ENCODE measurements at regions of chr13 and their contacts with region 1.

Region 1: GRCh38 chr13:100235311-100235901 is 146.5 kb downstream of the PCCA start:
- DNase-seq: peak in 1 of 2 donors; percentile 73
- H3K4me3 ChIP-seq: no peak overlapping the region
- H3K27ac ChIP-seq: no peak overlapping the region
- H3K4me1 ChIP-seq: peaks cover 0 to 43% (median 21%) of the 10 kb centered on the region in 4 donors
- H3K27me3 ChIP-seq: no peaks in the 10 kb centered on the region
- CTCF ChIP-seq: peak in 5 of 7 experiments; percentile 21 to 75 (median 55)
- EP300 ChIP-seq: no peak
- POLR2A ChIP-seq: no peak

Region 2: GRCh38 chr13:99656092-99656745 is 579.2 kb before region 1 on chr13:
- intact Hi-C with region 1: loop called (anchors 10 kb)
- DNase-seq: peak; percentile 84 to 91
- H3K4me3 ChIP-seq: no peak overlapping the region
- H3K27ac ChIP-seq: no peak overlapping the region
- H3K4me1 ChIP-seq: peaks cover 6 to 41% (median 28%) of the 10 kb centered on the region in 4 donors
- H3K27me3 ChIP-seq: peaks cover 0 to 8% (median 0%) of the 10 kb centered on the region in 3 donors
- CTCF ChIP-seq: peak in 5 of 7 experiments; percentile 57 to 92 (median 89)
- EP300 ChIP-seq: no peak
- POLR2A ChIP-seq: no peak

Region 3: DNA sequence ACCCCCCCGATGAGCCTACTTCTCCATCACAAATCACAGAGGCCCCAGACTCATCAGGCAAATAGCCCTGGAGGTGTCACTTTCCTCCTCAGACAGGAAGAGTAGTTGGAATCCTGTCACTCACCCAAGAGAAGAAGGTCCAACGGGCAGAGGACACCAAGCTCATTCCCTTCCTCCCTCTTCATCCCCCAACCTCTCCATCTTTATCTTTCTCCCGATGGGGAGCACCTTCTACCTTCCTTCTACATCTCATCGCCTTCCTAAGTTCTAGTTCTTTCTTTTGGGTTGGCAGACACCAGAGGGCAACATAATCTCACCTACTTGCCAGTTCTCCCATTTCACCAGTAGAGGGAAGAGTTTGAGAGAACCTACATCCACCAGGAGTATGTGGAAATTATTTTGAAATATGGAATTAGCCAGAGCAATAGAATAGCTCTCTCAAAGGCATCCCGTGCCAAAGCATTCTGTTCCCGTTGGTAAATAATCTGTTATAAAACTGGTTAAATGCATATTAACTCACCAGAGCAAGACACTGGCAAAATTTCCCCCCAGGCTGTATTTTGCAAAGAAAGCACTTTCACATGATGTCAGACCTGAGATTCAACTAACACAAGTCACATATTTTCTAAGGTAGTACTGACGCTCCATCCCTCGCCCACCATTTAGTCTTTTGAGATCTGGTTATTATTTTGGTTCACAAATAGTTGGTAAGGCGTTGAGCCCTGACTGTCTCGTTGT is 318.9 kb before region 1 on chr13:
- intact Hi-C with region 1: loop called (anchors 10 kb)
- DNase-seq: peak in 1 of 2 donors; percentile 77
- H3K4me3 ChIP-seq: no peak overlapping the region
- H3K27ac ChIP-seq: no peak overlapping the region
- H3K4me1 ChIP-seq: peaks cover 0 to 4% (median 0%) of the 10 kb centered on the region in 4 donors
- H3K27me3 ChIP-seq: peaks cover 0 to 45% (median 4%) of the 10 kb centered on the region in 3 donors
- CTCF ChIP-seq: peak in 5 of 7 experiments; percentile 66 to 94 (median 79)
- EP300 ChIP-seq: no peak
- POLR2A ChIP-seq: no peak

Region 4: GRCh38 chr13:100039740-100040139 is 195.7 kb before region 1 on chr13:
- intact Hi-C with region 1: no loop called
- DNase-seq: peak in 1 of 2 donors; percentile 8
- H3K4me3 ChIP-seq: no peak overlapping the region
- H3K27ac ChIP-seq: no peak overlapping the region
- H3K4me1 ChIP-seq: peaks cover 0 to 8% (median 5%) of the 10 kb centered on the region in 4 donors
- H3K27me3 ChIP-seq: no peaks in the 10 kb centered on the region
- CTCF ChIP-seq: no peak
- EP300 ChIP-seq: no peak
- POLR2A ChIP-seq: no peak

Region 5: GRCh38 chr13:100382785-100383184 is 147.4 kb after region 1 on chr13:
- intact Hi-C with region 1: no loop called
- DNase-seq: no peak
- H3K4me3 ChIP-seq: no peak overlapping the region
- H3K27ac ChIP-seq: no peak overlapping the region
- H3K4me1 ChIP-seq: no peaks in the 10 kb centered on the region
- H3K27me3 ChIP-seq: no peaks in the 10 kb centered on the region
- CTCF ChIP-seq: no peak
- EP300 ChIP-seq: no peak
- POLR2A ChIP-seq: no peak